OCI-LY7 (cell line): ENCODE measurements at regions of chr1 and their contacts with region 1.

Region 1: DNA sequence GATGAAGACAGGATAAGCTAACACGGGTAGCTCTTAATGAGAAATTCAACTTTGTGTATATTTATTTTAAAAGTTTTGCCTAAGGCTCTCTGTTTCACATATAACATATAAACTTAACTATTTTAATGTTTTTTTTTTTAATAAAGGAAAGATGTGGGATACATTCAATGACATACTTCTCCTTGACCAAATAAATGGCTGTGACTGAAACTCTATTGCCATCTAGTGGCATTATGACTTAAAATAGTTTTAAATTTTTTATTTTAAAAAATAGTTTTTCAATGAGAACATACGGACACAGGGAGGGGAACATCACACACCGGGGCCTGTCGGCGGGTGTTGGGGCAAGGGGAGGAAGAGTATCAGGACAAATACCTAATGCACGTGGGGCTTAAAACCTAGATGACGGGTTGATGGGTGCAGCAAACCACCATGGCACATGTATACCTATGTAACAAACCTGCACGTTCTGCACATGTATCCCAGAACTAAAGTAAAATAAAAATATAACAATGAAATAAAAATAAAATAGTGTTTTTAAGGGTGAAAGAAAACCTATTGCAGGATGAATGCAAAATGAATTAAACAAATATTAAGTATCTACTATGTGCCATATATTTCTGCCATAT is 83.4 kb downstream of the LYST start:
- DNase-seq: peak; percentile 47
- H3K4me3 ChIP-seq: no peak overlapping the region
- H3K27ac ChIP-seq: no peak overlapping the region
- H3K4me1 ChIP-seq: no peaks in the 10 kb centered on the region
- CTCF ChIP-seq: peak; percentile 77

Region 2: GRCh38 chr1:235105051-235106043 is 677.9 kb before region 1 on chr1:
- CTCF ChIA-PET with region 1: no interaction called
- POLR2A ChIA-PET with region 1: no interaction called
- intact Hi-C with region 1: loop called (anchors 10 kb)
- DNase-seq: peak; percentile 13
- H3K4me3 ChIP-seq: peak overlapping the region; percentile 30
- H3K27ac ChIP-seq: peak overlapping the region; percentile 38
- H3K4me1 ChIP-seq: peaks cover 16% of the 10 kb centered on the region
- CTCF ChIP-seq: no peak

Region 3: GRCh38 chr1:235513495-235514366 is 269.5 kb before region 1 on chr1:
- CTCF ChIA-PET with region 1: no interaction called
- POLR2A ChIA-PET with region 1: interaction called, 3 read pairs
- intact Hi-C with region 1: loop called (anchors 1 kb)
- DNase-seq: peak; percentile 65
- H3K4me3 ChIP-seq: no peak overlapping the region
- H3K27ac ChIP-seq: no peak overlapping the region
- H3K4me1 ChIP-seq: no peaks in the 10 kb centered on the region
- CTCF ChIP-seq: peak; percentile 97

Region 4: GRCh38 chr1:235713391-235713790 is 69.9 kb before region 1 on chr1:
- CTCF ChIA-PET with region 1: no interaction called
- POLR2A ChIA-PET with region 1: interaction called, 10 read pairs
- intact Hi-C with region 1: no loop called
- DNase-seq: no peak
- H3K4me3 ChIP-seq: no peak overlapping the region
- H3K27ac ChIP-seq: no peak overlapping the region
- H3K4me1 ChIP-seq: no peaks in the 10 kb centered on the region
- CTCF ChIP-seq: no peak

Region 5: DNA sequence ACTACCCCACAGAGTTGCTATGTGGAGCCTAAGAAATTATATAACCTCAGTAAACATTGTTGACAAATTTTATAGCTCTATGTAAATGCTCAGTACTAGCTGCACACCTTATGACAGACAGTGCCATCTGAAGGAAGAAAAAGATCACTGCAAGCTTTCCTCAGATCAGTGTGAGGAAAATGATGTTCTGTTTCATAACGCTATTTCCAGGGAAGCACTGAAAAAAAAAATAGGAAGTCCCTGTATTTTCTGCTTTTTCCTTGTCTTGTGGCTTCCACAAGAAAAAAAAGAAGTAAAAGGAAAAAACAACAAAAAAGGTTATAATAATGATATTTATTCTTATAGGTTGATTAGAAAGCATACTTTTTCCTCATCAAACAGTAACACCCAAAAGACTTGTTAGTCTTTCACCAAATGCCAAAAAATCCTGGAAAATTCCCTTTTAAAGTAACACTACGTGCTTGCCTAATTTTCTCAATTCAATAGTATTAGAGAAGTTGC is 60.2 kb after region 1 on chr1:
- CTCF ChIA-PET with region 1: interaction called, 6 read pairs
- POLR2A ChIA-PET with region 1: interaction called, 11 read pairs
- intact Hi-C with region 1: no loop called
- DNase-seq: peak; percentile 39
- H3K4me3 ChIP-seq: no peak overlapping the region
- H3K27ac ChIP-seq: no peak overlapping the region
- H3K4me1 ChIP-seq: peaks cover 26% of the 10 kb centered on the region
- CTCF ChIP-seq: peak; percentile 82